ENCODE measurements at regions of chr9 and their contacts with region 1.

Region 1: GRCh38 chr9:135410831-135411473 is 68.6 kb upstream of the PPP1R26 start:
- DNase-seq: no peak
- ATAC-seq: no peak
- H3K4me3 ChIP-seq: no peak overlapping the region
- H3K27ac ChIP-seq: no peak overlapping the region
- H3K4me1 ChIP-seq: no peaks in the 10 kb centered on the region
- H3K27me3 ChIP-seq: peaks cover 0 to 29% (median 9%) of the 10 kb centered on the region in 3 donors
- CTCF ChIP-seq: no peak

Region 2: GRCh38 chr9:134704498-134704897 is 706.5 kb before region 1 on chr9:
- intact Hi-C with region 1: loop called in 1 of 2 experiments (anchors 5 kb)
- DNase-seq: peak in 1 of 2 donors; percentile 26
- ATAC-seq: no peak
- H3K4me3 ChIP-seq: no peak overlapping the region
- H3K27ac ChIP-seq: no peak overlapping the region
- H3K4me1 ChIP-seq: no peaks in the 10 kb centered on the region
- H3K27me3 ChIP-seq: peaks cover 0 to 34% (median 12%) of the 10 kb centered on the region in 3 donors
- CTCF ChIP-seq: no peak

Region 3: GRCh38 chr9:135315572-135315971 is 95.4 kb before region 1 on chr9:
- intact Hi-C with region 1: no loop called
- DNase-seq: no peak
- ATAC-seq: no peak
- H3K4me3 ChIP-seq: no peak overlapping the region
- H3K27ac ChIP-seq: no peak overlapping the region
- H3K4me1 ChIP-seq: no peaks in the 10 kb centered on the region
- H3K27me3 ChIP-seq: peaks cover 0 to 32% (median 2%) of the 10 kb centered on the region in 3 donors
- CTCF ChIP-seq: no peak

Region 4: GRCh38 chr9:135343837-135344522 is 67.0 kb before region 1 on chr9:
- intact Hi-C with region 1: loop called in 1 of 2 experiments (anchors 2 kb)
- DNase-seq: peak; percentile 57 to 84
- ATAC-seq: peak; percentile 60 to 74 (median 66)
- H3K4me3 ChIP-seq: no peak overlapping the region
- H3K27ac ChIP-seq: no peak overlapping the region
- H3K4me1 ChIP-seq: no peaks in the 10 kb centered on the region
- H3K27me3 ChIP-seq: peaks cover 0 to 48% (median 12%) of the 10 kb centered on the region in 3 donors
- CTCF ChIP-seq: peak; percentile 85

Region 5: DNA sequence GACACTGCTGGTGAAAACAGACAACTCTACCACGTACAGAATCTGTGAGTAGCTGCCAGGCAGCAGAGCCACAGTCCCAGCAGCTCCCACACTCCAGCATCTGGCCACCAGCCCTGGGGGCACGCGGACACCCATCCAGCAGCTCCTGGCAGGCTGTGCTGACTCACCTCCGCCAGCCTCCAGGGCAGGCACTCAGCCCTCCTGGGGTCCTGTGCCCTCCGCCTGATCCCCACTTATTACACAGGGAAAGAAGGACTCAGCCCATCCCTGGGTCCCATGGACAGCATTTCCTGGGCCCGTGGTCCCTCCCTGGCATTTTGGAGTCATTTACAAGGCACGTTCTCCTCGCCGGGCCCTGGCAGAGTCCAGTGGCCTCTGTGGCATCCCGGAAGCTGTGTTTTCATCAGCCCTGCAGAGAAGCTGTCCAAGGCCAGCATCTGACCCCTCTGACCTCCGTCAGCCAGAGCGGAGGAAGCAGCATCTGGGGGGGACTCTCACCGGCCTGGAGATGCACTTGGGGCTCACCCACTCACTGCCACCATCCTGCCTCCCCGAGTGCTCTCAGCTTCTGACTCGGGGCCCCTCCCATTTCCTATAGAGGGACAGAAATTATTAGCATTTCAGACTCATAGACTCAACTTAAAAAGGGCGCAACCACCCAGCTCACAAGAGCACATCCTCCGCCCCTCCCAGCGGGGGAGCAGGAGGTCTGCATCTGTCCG is 172.2 kb after region 1 on chr9:
- intact Hi-C with region 1: no loop called
- DNase-seq: peak in 1 of 2 donors; percentile 22
- ATAC-seq: no peak
- H3K4me3 ChIP-seq: no peak overlapping the region
- H3K27ac ChIP-seq: no peak overlapping the region
- H3K4me1 ChIP-seq: no peaks in the 10 kb centered on the region
- H3K27me3 ChIP-seq: peaks cover 0 to 36% (median 7%) of the 10 kb centered on the region in 3 donors
- CTCF ChIP-seq: no peak